ENCODE measurements at regions of chr10 and their contacts with region 1.

Region 1: GRCh38 chr10:133329491-133330202 is 7.0 kb downstream of the CALY start:
- DNase-seq: peak; percentile 74
- H3K4me3 ChIP-seq: peak overlapping the region; percentile 35
- H3K27ac ChIP-seq: no peak overlapping the region
- H3K27me3 ChIP-seq: peaks cover 42% of the 10 kb centered on the region
- CTCF ChIP-seq: peak; percentile 95

Region 2: DNA sequence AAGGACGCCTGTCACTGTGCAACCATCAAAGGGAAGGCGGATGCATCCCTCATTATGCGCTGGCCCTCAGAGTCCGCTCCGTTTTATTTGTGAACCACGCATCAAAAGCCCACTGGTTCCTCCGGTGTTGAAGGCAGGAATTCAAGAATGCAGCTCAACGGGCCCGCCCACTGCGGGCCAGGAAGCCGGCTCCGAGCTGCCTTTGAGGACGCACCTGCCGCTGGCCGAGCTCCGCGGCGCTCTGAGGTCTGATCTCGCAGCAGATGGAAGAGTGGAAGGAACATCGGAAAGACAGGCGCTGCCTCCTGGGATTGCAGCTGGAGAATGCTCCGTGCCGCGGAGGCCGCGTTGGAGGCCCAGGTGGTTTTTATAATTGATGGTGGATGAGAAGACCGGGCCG is 298.9 kb before region 1 on chr10:
- CTCF ChIA-PET with region 1: no interaction called
- POLR2A ChIA-PET with region 1: no interaction called
- DNase-seq: no peak
- H3K4me3 ChIP-seq: no peak overlapping the region
- H3K27ac ChIP-seq: no peak overlapping the region
- H3K27me3 ChIP-seq: peaks cover 2% of the 10 kb centered on the region
- CTCF ChIP-seq: no peak

Region 3: DNA sequence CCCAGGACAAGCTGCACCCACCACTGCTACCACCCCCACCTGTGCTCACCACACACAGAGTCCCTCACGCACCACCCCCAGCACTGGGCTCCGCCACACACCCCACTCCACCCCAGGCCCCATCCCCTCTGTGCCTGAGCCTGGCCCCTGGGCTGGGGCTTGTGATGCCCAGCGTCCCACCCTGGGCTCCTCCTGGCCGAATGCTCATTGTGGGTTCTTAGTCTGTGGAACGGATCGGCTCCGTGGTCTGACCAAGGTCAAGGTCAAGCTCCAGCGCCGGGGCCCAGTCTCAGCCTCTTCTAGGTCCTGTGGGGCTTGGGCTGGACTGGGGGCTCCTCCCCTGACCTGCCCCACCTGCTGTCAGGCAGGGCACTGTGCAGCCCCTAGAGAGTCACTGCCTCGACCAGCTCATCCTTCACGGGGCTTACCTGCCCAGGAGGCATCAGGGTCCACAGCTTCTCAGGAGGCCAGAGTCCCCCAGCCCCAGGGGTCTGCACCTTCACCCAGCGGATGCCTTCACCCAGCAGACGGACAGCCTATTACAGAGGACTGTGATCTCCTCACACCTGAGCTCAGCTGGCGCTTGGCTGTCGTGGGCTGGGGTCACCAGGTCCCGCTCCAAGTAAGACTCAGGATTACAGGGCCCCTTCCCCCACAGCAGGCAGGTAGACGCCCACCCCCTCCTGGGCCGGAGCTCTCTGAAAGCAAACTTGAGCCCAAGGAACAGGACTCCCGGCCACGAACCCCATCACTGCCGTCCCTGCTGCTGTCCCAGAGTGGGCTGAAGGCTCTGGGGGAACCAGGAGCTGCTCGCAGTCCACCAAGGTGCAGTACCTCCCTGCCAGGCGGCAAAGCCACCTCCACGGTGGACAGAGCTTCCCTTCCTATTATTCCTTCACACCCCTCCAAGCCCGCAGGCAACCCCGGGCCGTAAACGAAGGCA is 114.9 kb before region 1 on chr10:
- CTCF ChIA-PET with region 1: no interaction called
- POLR2A ChIA-PET with region 1: no interaction called
- DNase-seq: no peak
- H3K4me3 ChIP-seq: no peak overlapping the region
- H3K27ac ChIP-seq: no peak overlapping the region
- H3K27me3 ChIP-seq: no peaks in the 10 kb centered on the region
- CTCF ChIP-seq: no peak

Region 4: DNA sequence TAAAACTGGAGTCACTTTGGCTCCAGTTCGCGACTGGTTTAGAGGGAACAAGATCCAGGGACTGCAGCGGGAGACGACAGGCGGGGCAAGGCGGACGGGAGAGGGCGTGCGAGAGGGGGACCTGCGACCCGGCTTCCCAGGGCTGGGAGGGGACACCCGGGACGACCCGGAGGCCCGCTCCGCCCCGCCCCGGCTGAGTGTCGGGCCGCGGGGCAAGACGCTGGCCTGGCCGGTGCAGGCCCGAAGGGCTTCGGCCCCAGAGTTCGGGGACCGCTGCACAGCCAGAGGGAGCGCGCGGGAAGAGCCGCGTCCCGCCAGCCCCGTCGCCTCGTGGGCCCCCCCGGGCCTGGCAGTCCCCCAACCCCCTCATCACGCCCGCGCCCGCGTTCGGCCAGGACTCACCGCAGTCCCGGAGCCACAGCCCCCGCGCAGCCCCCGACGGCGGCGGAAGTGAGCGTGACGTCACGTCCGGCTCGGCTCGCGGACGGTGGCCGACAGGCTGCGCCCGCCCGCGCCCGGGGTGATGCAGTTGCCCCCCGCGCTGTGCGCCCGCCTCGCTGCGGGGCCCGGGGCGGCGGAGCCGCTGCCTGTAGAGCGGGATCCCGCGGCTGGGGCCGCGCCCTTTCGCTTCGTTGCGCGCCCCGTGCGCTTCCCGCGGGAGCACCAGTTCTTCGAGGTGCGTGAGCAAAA is 21.1 kb before region 1 on chr10 and contains the starts of genes TUBGCP2 and ZNF511:
- CTCF ChIA-PET with region 1: interaction called, 15 read pairs
- POLR2A ChIA-PET with region 1: no interaction called
- DNase-seq: no peak
- H3K4me3 ChIP-seq: peak within 1 kb of the TSS; percentile 82
- H3K27ac ChIP-seq: peak within 1 kb of the TSS; percentile 70
- H3K27me3 ChIP-seq: no peaks in the 10 kb centered on the region
- CTCF ChIP-seq: no peak; the same call in 1 of the 2 replicates
- polyA plus RNA-seq, gene TUBGCP2: 40.0 and 45.1 TPM in 2 replicates
- polyA plus RNA-seq, gene ZNF511: 21.6 and 31.3 TPM in 2 replicates

Region 5: GRCh38 chr10:133347710-133348517 is 18.3 kb after region 1 on chr10:
- CTCF ChIA-PET with region 1: interaction called, 17 read pairs
- POLR2A ChIA-PET with region 1: no interaction called
- DNase-seq: no peak
- H3K4me3 ChIP-seq: no peak overlapping the region
- H3K27ac ChIP-seq: no peak overlapping the region
- H3K27me3 ChIP-seq: peaks cover 13% of the 10 kb centered on the region
- CTCF ChIP-seq: no peak

Region 6: GRCh38 chr10:133366751-133367150 is 37.1 kb after region 1 on chr10:
- CTCF ChIA-PET with region 1: interaction called, 20 read pairs
- POLR2A ChIA-PET with region 1: interaction called, 3 read pairs
- DNase-seq: no peak
- H3K4me3 ChIP-seq: no peak overlapping the region
- H3K27ac ChIP-seq: no peak overlapping the region
- H3K27me3 ChIP-seq: no peaks in the 10 kb centered on the region
- CTCF ChIP-seq: no peak

Region 7: DNA sequence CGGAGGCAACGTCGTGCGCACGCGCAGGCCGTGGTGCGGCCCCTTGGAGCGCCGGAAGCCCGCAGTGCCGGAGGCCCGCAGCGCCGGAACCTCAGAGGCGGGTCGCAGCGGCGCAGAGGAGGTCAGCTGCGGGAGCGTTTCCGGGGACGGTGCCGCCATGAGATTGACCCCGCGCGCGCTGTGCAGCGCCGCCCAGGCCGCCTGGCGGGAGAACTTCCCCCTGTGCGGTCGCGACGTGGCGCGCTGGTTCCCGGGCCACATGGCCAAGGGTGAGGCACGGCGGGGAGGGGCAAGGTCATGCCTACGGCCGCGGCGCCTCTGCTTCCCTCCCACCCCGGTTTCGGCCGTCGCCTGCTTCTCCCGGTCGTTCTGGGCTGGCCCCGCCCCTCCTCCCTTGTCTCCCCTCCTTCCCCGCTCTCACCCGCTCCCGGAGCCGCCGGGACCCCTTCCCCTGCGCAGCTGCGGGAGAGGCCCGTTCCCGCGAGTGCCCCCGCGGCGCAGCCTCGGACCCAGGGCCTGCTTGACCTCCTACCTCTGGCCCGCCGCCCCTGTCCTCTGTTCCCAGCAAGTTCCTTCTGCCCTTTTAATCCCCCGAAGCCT is 64.5 kb after region 1 on chr10 and contains the start of gene MTG1:
- CTCF ChIA-PET with region 1: interaction called, 11 read pairs
- POLR2A ChIA-PET with region 1: no interaction called
- DNase-seq: peak; percentile 69
- H3K4me3 ChIP-seq: peak within 1 kb of the TSS; percentile 86
- H3K27ac ChIP-seq: peak within 1 kb of the TSS; percentile 70
- H3K27me3 ChIP-seq: no peaks in the 10 kb centered on the region
- CTCF ChIP-seq: no peak
- polyA plus RNA-seq, gene MTG1: 36.1 and 40.2 TPM in 2 replicates

Region 8: DNA sequence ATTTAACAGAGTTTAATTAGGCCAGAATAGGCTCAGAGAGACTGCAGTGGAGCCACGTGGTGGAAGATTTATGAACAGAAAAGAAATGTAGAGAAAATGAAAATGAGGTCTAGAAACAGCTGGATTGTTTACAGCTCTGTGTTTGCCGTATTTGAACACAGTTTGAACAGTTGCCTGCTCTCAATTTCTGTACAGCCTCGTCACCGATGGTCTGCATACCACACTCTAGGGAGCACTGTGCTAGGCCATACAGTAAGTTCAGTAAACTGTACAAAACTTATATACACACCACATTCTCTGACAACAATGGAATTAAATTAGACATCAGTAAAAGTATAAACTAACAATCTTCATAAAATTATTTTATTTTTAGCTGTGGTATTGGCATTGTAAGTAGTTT is 186.4 kb after region 1 on chr10:
- CTCF ChIA-PET with region 1: interaction called, 14 read pairs
- POLR2A ChIA-PET with region 1: no interaction called
- DNase-seq: no peak
- H3K4me3 ChIP-seq: no peak overlapping the region
- H3K27ac ChIP-seq: no peak overlapping the region
- H3K27me3 ChIP-seq: peaks cover 2% of the 10 kb centered on the region
- CTCF ChIP-seq: 0 out of 2 replicates have a peak, but pooled peaks have one; percentile 1

Measured in AG04450 (cell line).